Activated CD8-positive, alpha-beta T cell treated with anti-CD3 and anti-CD28 coated beads for 36 hours (primary cell): ENCODE measurements at regions of chr5 and their contacts with region 1.

Region 1: DNA sequence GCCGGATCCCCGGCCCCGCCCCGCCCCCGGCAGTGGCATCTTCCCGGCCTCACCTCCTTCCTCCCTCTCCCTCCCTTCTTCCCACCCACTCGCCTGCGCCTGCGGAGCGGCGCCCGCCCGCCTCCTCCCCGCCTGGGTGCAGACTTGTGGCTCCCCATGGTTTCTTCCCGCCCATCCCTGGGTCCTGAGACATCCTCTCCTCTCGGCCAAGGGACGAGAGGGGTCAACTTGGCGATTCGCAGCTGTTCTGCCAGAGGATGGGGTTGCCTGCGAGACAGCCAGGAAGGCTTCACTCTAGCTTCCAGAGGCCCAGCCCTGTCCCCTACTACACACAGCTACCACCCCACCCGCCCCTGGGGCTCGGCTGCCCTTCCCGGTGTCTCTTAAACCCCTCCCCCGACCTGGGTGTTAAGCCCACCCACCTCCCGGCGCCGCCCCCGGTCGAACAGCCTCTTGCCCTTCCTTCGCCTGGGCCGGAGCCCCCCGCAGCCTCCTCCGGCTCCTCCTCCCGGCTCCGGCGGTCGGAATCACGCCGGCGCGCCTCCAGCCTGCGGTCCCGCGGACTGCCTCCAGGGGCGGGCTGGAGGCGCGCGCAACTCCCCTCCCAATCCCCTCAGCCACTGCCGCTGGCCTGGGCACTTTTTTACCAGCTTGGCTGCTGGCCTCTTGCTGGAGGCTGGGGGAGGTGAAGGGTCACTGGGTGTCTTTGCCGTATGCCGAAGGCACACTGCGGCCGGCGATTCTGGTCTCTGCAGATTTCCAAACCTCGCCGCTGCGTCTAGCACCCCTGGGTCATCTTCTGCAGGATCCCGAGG is 1.9 kb downstream of the JADE2 start:
- DNase-seq: peak; percentile 91
- ATAC-seq: peak; percentile 66
- H3K4me3 Mint-ChIP-seq: peak overlapping the region; percentile 88
- H3K27ac Mint-ChIP-seq: peak overlapping the region; percentile 94
- H3K4me1 Mint-ChIP-seq: peaks cover 55% of the 10 kb centered on the region
- H3K27me3 Mint-ChIP-seq: no peaks in the 10 kb centered on the region
- CTCF ChIP-seq: peak; percentile 89

Region 2: DNA sequence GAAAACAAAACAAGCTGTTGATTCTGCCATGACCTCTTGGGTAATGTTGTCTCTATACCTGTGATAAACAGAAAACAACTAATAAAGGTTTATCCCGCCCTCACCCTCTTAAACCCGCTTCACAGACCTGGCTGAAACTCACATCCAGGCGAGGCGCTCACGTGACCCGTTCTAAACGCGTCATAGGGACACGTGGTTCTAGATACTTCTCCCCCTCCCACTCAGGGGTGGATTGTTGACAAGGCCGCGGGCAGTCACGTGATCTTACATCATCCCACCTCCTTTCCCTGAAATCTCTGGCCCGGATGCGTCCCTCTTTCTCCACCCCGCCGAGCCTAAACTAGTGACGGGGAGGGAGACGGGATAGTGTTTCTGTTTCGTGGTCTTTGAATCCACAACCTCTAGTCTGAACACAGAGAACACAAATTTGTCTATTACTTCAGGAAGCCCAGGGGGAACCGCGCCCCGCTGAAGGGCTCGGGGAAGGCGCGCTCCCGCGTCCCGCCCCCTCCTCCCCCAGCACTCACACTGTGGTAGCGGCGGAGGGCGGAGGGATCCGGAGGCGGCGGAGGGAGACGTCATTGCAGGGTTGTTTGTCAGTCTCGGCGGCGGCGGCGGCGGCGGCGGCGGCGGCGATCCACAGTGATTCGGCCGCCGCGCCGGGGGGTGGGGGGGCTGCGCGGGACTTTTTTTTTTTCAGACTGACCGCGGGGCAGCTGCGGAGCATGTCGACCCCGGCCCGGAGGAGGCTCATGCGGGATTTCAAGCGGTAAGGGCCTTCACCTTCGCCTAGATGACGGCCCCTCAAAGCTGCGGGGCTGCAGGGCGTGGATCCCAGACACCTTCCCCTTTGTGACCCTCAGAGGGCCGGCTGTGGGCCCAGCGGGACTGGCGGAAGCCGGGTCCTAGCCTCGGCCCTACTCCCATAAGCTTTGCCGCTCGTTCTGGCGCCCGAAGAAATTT is 156.2 kb before region 1 on chr5 and contains the start of gene UBE2B:
- CTCF ChIA-PET with region 1: interaction called, 3 read pairs
- POLR2A ChIA-PET with region 1: interaction called, 28 read pairs
- intact Hi-C with region 1: loop called (anchors 5 kb)
- DNase-seq: peak; percentile 100
- ATAC-seq: peak; percentile 77
- H3K4me3 Mint-ChIP-seq: peak within 1 kb of the TSS; percentile 95
- H3K27ac Mint-ChIP-seq: peak within 1 kb of the TSS; percentile 99
- H3K4me1 Mint-ChIP-seq: peaks cover 41% of the 10 kb centered on the region
- H3K27me3 Mint-ChIP-seq: no peaks in the 10 kb centered on the region
- CTCF ChIP-seq: no peak
- total RNA-seq, gene UBE2B: 97.6 to 98.9 TPM

Region 3: GRCh38 chr5:134503088-134503946 is 24.0 kb before region 1 on chr5:
- CTCF ChIA-PET with region 1: interaction called, 4 read pairs
- POLR2A ChIA-PET with region 1: interaction called, 25 read pairs
- intact Hi-C with region 1: no loop called
- DNase-seq: peak; percentile 91
- ATAC-seq: peak; percentile 97
- H3K4me3 Mint-ChIP-seq: peak overlapping the region; percentile 21
- H3K27ac Mint-ChIP-seq: peak overlapping the region; percentile 96
- H3K4me1 Mint-ChIP-seq: peaks cover 28% of the 10 kb centered on the region
- H3K27me3 Mint-ChIP-seq: no peaks in the 10 kb centered on the region
- CTCF ChIP-seq: no peak

Region 4: GRCh38 chr5:134543820-134544614 is 16.7 kb after region 1 on chr5:
- CTCF ChIA-PET with region 1: interaction called, 15 read pairs
- POLR2A ChIA-PET with region 1: interaction called, 11 read pairs
- intact Hi-C with region 1: no loop called
- DNase-seq: peak; percentile 76
- ATAC-seq: peak; percentile 84
- H3K4me3 Mint-ChIP-seq: peak overlapping the region; percentile 76
- H3K27ac Mint-ChIP-seq: peak overlapping the region; percentile 96
- H3K4me1 Mint-ChIP-seq: peaks cover 70% of the 10 kb centered on the region
- H3K27me3 Mint-ChIP-seq: no peaks in the 10 kb centered on the region
- CTCF ChIP-seq: no peak

Region 5: DNA sequence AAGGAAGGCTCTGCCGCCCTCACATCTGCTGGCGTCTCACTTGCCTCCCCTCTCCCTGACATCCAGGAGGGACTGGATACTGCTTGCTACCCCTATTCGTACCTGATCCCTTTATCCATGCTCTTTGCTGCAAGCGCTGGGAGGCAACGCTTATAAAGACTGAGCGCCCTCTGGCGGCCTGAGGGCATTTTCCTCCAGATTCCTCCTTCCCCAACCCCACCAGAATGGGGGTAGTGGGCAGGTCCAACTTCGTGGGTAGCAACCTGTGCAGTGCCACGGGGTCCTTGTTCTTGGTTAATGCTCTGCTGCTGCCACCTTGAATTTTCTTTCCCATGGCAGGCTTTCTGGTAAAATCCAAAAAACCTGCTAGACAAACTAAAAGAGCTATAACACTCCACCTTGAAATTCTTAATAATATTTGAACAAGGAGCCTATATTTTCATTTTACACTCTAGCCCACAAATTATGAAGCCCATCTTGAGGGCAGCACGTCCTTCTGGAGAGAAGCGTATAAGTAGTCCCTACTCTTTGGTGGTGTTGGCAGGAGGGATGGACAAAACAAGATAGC is 50.5 kb after region 1 on chr5:
- CTCF ChIA-PET with region 1: interaction called, 8 read pairs
- POLR2A ChIA-PET with region 1: interaction called, 3 read pairs
- intact Hi-C with region 1: loop called (anchors 1 kb)
- DNase-seq: peak; percentile 89
- ATAC-seq: peak; percentile 81
- H3K4me3 Mint-ChIP-seq: no peak overlapping the region
- H3K27ac Mint-ChIP-seq: peak overlapping the region; percentile 25
- H3K4me1 Mint-ChIP-seq: peaks cover 2% of the 10 kb centered on the region
- H3K27me3 Mint-ChIP-seq: no peaks in the 10 kb centered on the region
- CTCF ChIP-seq: peak; percentile 95

Region 6: GRCh38 chr5:134692722-134693121 is 165.4 kb after region 1 on chr5:
- CTCF ChIA-PET with region 1: no interaction called
- POLR2A ChIA-PET with region 1: no interaction called
- intact Hi-C with region 1: no loop called
- DNase-seq: no peak
- ATAC-seq: no peak
- H3K4me3 Mint-ChIP-seq: no peak overlapping the region
- H3K27ac Mint-ChIP-seq: no peak overlapping the region
- H3K4me1 Mint-ChIP-seq: no peaks in the 10 kb centered on the region
- H3K27me3 Mint-ChIP-seq: no peaks in the 10 kb centered on the region
- CTCF ChIP-seq: no peak